ENCODE measurements at regions of chr22 and their contacts with region 1.

Region 1: GRCh38 chr22:31970490-31971444 is 26.4 kb downstream of the YWHAH start:
- DNase-seq: peak; percentile 89
- ATAC-seq: peak; percentile 97
- H3K4me3 Mint-ChIP-seq: peak overlapping the region; percentile 70
- H3K27ac Mint-ChIP-seq: peak overlapping the region; percentile 49
- H3K4me1 Mint-ChIP-seq: peaks cover 14% of the 10 kb centered on the region
- H3K27me3 Mint-ChIP-seq: peaks cover 2% of the 10 kb centered on the region

Region 2: DNA sequence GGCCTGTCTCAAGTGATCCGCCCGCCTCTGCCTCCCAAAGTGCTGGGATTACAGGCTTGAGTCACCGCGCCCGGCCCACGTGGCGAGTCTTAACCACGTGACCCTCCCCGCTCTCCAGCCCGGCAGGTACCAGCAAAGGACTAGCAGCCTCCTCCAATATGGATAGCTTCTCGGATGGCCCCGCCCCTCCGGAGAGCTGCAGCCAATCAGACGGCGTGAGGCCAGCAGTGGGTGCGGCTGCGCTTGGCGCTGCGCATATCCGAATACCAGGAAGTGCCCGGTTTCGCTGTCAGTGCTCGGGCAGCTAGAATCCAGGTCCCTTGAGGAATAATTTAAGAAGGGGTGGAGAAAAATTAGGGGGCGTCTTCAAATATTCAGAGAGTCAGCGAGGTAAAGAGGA is 294.1 kb before region 1 on chr22:
- CTCF ChIA-PET with region 1: interaction called, 13 read pairs
- DNase-seq: peak; percentile 97
- ATAC-seq: peak; percentile 100
- H3K4me3 Mint-ChIP-seq: peak overlapping the region; percentile 87
- H3K27ac Mint-ChIP-seq: peak overlapping the region; percentile 89
- H3K4me1 Mint-ChIP-seq: peaks cover 17% of the 10 kb centered on the region
- H3K27me3 Mint-ChIP-seq: no peaks in the 10 kb centered on the region

Region 3: GRCh38 chr22:31944700-31945474 is 25.9 kb before region 1 on chr22:
- CTCF ChIA-PET with region 1: interaction called, 19 read pairs
- DNase-seq: peak; percentile 55
- ATAC-seq: peak; percentile 24
- H3K4me3 Mint-ChIP-seq: no peak overlapping the region
- H3K27ac Mint-ChIP-seq: peak overlapping the region; percentile 35
- H3K4me1 Mint-ChIP-seq: peaks cover 38% of the 10 kb centered on the region
- H3K27me3 Mint-ChIP-seq: no peaks in the 10 kb centered on the region

Region 4: DNA sequence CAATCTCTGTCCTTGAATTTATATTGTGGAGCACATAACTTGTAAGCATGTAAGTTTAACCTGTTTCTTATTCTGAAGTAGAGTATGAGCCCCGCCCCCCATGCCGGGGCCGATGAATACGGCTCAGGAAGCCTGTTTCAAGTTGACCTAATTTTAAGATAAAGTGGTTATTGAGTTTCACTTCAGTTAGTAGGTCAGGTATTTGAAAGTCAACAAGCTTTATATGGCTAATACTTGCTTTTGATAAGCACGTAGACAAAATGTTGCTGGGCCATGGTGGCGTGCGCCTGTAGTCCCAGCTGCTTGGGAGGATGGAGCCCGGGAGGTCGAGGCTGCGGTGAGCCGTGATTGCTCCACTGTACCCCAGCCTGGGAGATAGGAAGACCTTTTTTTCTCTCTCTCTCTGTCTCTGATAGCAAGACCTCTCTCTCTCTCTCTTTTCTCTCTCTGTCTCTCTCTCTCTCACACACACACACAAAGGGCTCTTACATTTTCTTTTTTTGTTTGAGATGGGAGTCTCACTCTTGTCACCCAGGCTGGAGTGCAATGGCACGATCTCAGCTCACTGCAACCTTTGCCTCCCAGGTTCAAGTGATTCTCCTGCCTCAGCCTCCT is 12.0 kb before region 1 on chr22:
- CTCF ChIA-PET with region 1: interaction called, 26 read pairs
- DNase-seq: no peak
- ATAC-seq: peak; percentile 33
- H3K4me3 Mint-ChIP-seq: no peak overlapping the region
- H3K27ac Mint-ChIP-seq: peak overlapping the region; percentile 26
- H3K4me1 Mint-ChIP-seq: peaks cover 41% of the 10 kb centered on the region
- H3K27me3 Mint-ChIP-seq: peaks cover 3% of the 10 kb centered on the region

Region 5: GRCh38 chr22:32265882-32266767 is 295.4 kb after region 1 on chr22:
- CTCF ChIA-PET with region 1: interaction called, 17 read pairs
- DNase-seq: peak; percentile 82
- ATAC-seq: peak; percentile 85
- H3K4me3 Mint-ChIP-seq: no peak overlapping the region
- H3K27ac Mint-ChIP-seq: no peak overlapping the region
- H3K4me1 Mint-ChIP-seq: peaks cover 6% of the 10 kb centered on the region
- H3K27me3 Mint-ChIP-seq: peaks cover 11% of the 10 kb centered on the region

Measured in activated CD8-positive, alpha-beta memory T cell treated with anti-CD3 and anti-CD28 coated beads, Interleukin-2, amount 10 ng/mL, durations not matched to agents 7 days and 5 days (primary cell).